Caco-2 (cell line): ENCODE measurements at regions of chr13 and their contacts with region 1.

Region 1: DNA sequence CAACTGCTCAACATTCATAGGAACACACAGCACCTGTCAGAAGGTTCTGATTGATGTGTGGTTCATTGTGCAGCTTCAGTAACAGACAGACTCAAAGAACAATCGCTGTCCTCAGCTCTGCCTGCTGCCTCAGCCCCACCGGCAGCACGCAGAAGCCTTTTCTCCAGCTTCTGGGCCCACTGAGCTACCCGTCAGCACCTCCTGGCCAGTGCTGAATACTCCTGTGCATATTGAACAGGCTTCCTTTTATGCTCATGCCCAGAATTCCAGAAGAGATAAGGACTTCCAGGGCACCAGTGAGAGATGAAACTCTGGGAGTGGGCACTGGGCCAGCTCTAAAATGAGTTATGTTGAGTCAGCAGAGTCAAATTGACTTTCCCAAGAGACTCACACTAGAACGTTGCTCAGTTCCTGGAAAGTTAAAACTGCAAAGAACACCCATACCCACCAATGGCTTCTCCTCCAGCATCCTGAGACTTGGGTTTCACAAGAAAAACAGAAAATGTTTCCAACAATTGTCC is 119.3 kb downstream of the COL4A1 start:
- DNase-seq: no peak
- H3K4me3 ChIP-seq: no peak overlapping the region
- H3K4me3 Mint-ChIP-seq: no peak overlapping the region
- H3K27ac Mint-ChIP-seq: peak overlapping the region; percentile 89
- H3K4me1 ChIP-seq: peaks cover 37% of the 10 kb centered on the region
- H3K4me1 Mint-ChIP-seq: peaks cover 26% of the 10 kb centered on the region
- H3K27me3 ChIP-seq: no peaks in the 10 kb centered on the region
- H3K27me3 Mint-ChIP-seq: no peaks in the 10 kb centered on the region
- CTCF ChIP-seq: no peak

Region 2: DNA sequence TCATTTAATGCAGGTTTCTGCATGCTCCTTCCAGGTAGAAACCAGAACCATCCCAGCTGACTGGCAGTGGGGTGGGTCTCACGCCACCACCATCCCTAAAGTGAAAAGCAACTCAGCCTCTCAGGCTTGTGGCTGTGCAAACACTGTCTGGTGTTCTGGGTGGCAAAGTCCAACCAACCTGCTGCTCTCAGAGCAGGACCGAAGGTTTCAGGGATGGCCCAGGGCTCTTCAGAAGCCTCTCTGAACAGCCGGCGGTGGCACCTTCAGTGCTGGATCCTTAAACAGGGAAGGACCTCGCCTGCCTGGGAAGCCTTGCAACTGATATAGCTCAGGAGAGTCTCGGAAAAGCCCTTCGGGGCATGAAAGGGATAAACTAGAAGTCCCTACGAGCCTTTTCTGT is 18.5 kb after region 1 on chr13:
- CTCF ChIA-PET with region 1: no interaction called
- POLR2A ChIA-PET with region 1: no interaction called
- intact Hi-C with region 1: loop called (anchors 1 kb)
- DNase-seq: peak; percentile 77 to 84
- H3K4me3 ChIP-seq: no peak overlapping the region
- H3K4me3 Mint-ChIP-seq: no peak overlapping the region
- H3K27ac Mint-ChIP-seq: peak overlapping the region; percentile 72
- H3K4me1 ChIP-seq: peaks cover 12% of the 10 kb centered on the region
- H3K4me1 Mint-ChIP-seq: peaks cover 2% of the 10 kb centered on the region
- H3K27me3 ChIP-seq: no peaks in the 10 kb centered on the region
- H3K27me3 Mint-ChIP-seq: no peaks in the 10 kb centered on the region
- CTCF ChIP-seq: no peak